ENCODE measurements at regions of chr22 and their contacts with region 1.

Region 1: GRCh38 chr22:19109198-19110067 is 12.8 kb downstream of the DGCR2 start:
- DNase-seq: peak; percentile 78
- H3K4me3 Mint-ChIP-seq: peak overlapping the region; percentile 39
- H3K27ac Mint-ChIP-seq: peak overlapping the region; percentile 79
- H3K4me1 Mint-ChIP-seq: peaks cover 67% of the 10 kb centered on the region
- H3K27me3 Mint-ChIP-seq: no peaks in the 10 kb centered on the region

Region 2: GRCh38 chr22:18998998-18999397 is 110.4 kb before region 1 on chr22:
- CTCF ChIA-PET with region 1: no interaction called
- intact Hi-C with region 1: no loop called
- DNase-seq: peak; percentile 30
- H3K4me3 Mint-ChIP-seq: no peak overlapping the region
- H3K27ac Mint-ChIP-seq: no peak overlapping the region
- H3K4me1 Mint-ChIP-seq: no peaks in the 10 kb centered on the region
- H3K27me3 Mint-ChIP-seq: peaks cover 15% of the 10 kb centered on the region

Region 3: GRCh38 chr22:19122143-19122751 is 12.8 kb after region 1 on chr22 and contains the start of gene DGCR2:
- CTCF ChIA-PET with region 1: interaction called, 7 read pairs
- intact Hi-C with region 1: loop called (anchors 1 kb)
- DNase-seq: peak; percentile 98
- H3K4me3 Mint-ChIP-seq: peak within 1 kb of the TSS; percentile 84
- H3K27ac Mint-ChIP-seq: peak within 1 kb of the TSS; percentile 66
- H3K4me1 Mint-ChIP-seq: peaks cover 47% of the 10 kb centered on the region
- H3K27me3 Mint-ChIP-seq: no peaks in the 10 kb centered on the region
- total RNA-seq, gene DGCR2: 15.4 to 16.4 TPM

Region 4: GRCh38 chr22:19143967-19144400 is 34.6 kb after region 1 on chr22:
- CTCF ChIA-PET with region 1: interaction called, 11 read pairs
- intact Hi-C with region 1: loop called (anchors 1 kb)
- DNase-seq: peak; percentile 50
- H3K4me3 Mint-ChIP-seq: peak overlapping the region; percentile 99
- H3K27ac Mint-ChIP-seq: peak overlapping the region; percentile 91
- H3K4me1 Mint-ChIP-seq: peaks cover 19% of the 10 kb centered on the region
- H3K27me3 Mint-ChIP-seq: peaks cover 13% of the 10 kb centered on the region

Region 5: GRCh38 chr22:19178656-19179496 is 69.4 kb after region 1 on chr22 and contains the start of gene SLC25A1:
- CTCF ChIA-PET with region 1: interaction called, 4 read pairs
- intact Hi-C with region 1: loop called (anchors 2 kb)
- DNase-seq: peak; percentile 85
- H3K4me3 Mint-ChIP-seq: peak within 1 kb of the TSS; percentile 75
- H3K27ac Mint-ChIP-seq: peak within 1 kb of the TSS; percentile 53
- H3K4me1 Mint-ChIP-seq: peaks cover 31% of the 10 kb centered on the region
- H3K27me3 Mint-ChIP-seq: no peaks in the 10 kb centered on the region
- total RNA-seq, gene SLC25A1: 54.0 to 58.4 TPM

Region 6: GRCh38 chr22:19291580-19292457 is 182.4 kb after region 1 on chr22 and contains the start of gene CLTCL1:
- CTCF ChIA-PET with region 1: no interaction called
- intact Hi-C with region 1: loop called (anchors 5 kb)
- DNase-seq: peak; percentile 69
- H3K4me3 Mint-ChIP-seq: peak within 1 kb of the TSS; percentile 87
- H3K27ac Mint-ChIP-seq: peak within 1 kb of the TSS; percentile 73
- H3K4me1 Mint-ChIP-seq: peaks cover 13% of the 10 kb centered on the region
- H3K27me3 Mint-ChIP-seq: peaks cover 15% of the 10 kb centered on the region
- total RNA-seq, gene CLTCL1: 0.57 to 1.0 TPM

Region 7: GRCh38 chr22:19447388-19448075 is 338.1 kb after region 1 on chr22 and contains the start of gene C22orf39:
- CTCF ChIA-PET with region 1: no interaction called
- intact Hi-C with region 1: loop called (anchors 1 kb)
- DNase-seq: peak; percentile 93
- H3K4me3 Mint-ChIP-seq: peak within 1 kb of the TSS; percentile 86
- H3K27ac Mint-ChIP-seq: peak within 1 kb of the TSS; percentile 90
- H3K4me1 Mint-ChIP-seq: peaks cover 46% of the 10 kb centered on the region
- H3K27me3 Mint-ChIP-seq: no peaks in the 10 kb centered on the region
- total RNA-seq, gene C22orf39: 29.3 to 30.2 TPM